ENCODE measurements at regions of chr1 and their contacts with region 1.

Region 1: GRCh38 chr1:150621497-150622302 is 7.7 kb downstream of the ENSA start:
- DNase-seq: peak; percentile 63
- H3K4me3 ChIP-seq: no peak overlapping the region
- H3K27ac ChIP-seq: peak overlapping the region; percentile 48
- H3K4me1 ChIP-seq: peaks cover 12% of the 10 kb centered on the region
- H3K27me3 ChIP-seq: no peaks in the 10 kb centered on the region
- CTCF ChIP-seq: peak; percentile 57

Region 2: DNA sequence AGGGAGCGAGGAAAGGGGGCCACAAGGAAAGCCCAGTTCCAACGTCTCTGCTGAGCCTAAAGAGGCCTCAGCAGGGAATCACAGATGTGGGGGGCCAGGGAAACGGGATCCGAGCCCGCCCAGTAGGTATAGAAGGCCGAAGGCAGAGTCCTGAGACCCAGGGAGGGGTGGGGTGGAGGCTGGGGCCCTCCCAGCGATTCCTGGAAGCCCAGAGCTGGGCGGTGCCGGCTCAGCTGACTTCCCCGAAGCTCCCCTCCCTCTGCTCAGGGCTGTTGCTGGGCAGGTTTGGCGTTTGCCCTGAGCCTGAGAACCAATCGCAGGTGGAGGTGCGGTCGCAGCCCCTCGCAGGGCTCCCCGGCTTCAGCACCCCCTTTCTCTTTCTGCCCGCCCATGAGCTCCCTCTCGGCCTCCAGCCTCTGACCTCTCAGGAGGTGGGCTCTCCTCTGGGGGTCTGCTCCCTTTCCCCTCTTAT is 59.7 kb before region 1 on chr1:
- intact Hi-C with region 1: loop called (anchors 2 kb)
- DNase-seq: peak; percentile 96
- H3K4me3 ChIP-seq: peak overlapping the region; percentile 42
- H3K27ac ChIP-seq: peak overlapping the region; percentile 98
- H3K4me1 ChIP-seq: peaks cover 41% of the 10 kb centered on the region
- H3K27me3 ChIP-seq: no peaks in the 10 kb centered on the region
- CTCF ChIP-seq: no peak

Region 3: GRCh38 chr1:150578965-150579798 is 42.5 kb before region 1 on chr1 and contains the start of gene MCL1:
- intact Hi-C with region 1: loop called (anchors 5 kb)
- DNase-seq: peak; percentile 94
- H3K4me3 ChIP-seq: peak within 1 kb of the TSS; percentile 87
- H3K27ac ChIP-seq: peak within 1 kb of the TSS; percentile 98
- H3K4me1 ChIP-seq: no peaks in the 10 kb centered on the region
- H3K27me3 ChIP-seq: no peaks in the 10 kb centered on the region
- CTCF ChIP-seq: no peak
- total RNA-seq, gene MCL1: 151 to 285 TPM

Region 4: GRCh38 chr1:150674881-150675280 is 53.2 kb after region 1 on chr1:
- intact Hi-C with region 1: no loop called
- DNase-seq: no peak
- H3K4me3 ChIP-seq: no peak overlapping the region
- H3K27ac ChIP-seq: no peak overlapping the region
- H3K4me1 ChIP-seq: peaks cover 5% of the 10 kb centered on the region
- H3K27me3 ChIP-seq: no peaks in the 10 kb centered on the region
- CTCF ChIP-seq: no peak